ENCODE measurements at regions of chr12 and their contacts with region 1.

Region 1: DNA sequence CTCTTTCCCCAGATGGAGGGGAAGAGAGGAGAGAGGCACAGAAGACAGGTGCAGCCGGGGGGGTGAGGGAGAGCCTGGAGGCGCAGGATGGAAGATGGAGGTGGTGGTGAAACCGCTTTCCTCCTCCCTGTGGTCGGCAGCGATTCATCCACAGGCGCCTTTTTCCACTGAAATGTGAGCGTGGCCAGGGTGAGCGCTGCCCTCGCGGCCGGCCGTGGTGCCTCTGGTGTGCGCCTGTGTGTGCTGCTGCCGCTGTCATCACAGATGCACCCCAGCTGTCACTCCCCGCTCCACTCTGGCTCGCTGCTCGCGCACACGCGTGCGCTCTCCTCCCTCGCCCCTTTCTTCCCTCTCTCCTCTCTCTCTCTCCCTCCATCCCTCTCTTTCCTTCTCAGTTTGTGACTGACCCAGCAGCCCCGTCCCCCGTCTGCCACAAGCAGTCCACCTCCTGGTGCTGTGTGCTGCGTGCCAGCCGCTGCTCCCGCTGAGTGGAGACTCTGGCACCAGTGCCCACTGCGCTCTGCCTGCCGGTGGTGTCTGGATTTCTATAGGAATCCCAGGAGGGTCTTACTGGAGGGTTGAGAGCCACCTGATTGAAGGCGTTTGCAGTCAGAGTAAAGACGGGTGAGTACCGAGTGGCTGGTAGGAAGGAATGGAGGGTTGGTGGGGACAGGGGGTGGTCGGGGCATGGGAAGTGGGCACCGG is at the start of gene LRTM2:
- DNase-seq: no peak
- H3K4me3 ChIP-seq: no peak within 1 kb of the TSS
- H3K27ac ChIP-seq: no peak within 1 kb of the TSS
- H3K4me1 ChIP-seq: no peaks in the 10 kb centered on the region
- H3K27me3 ChIP-seq: peaks cover 19% of the 10 kb centered on the region
- CTCF ChIP-seq: no peak
- total RNA-seq, gene LRTM2: not detected

Region 2: DNA sequence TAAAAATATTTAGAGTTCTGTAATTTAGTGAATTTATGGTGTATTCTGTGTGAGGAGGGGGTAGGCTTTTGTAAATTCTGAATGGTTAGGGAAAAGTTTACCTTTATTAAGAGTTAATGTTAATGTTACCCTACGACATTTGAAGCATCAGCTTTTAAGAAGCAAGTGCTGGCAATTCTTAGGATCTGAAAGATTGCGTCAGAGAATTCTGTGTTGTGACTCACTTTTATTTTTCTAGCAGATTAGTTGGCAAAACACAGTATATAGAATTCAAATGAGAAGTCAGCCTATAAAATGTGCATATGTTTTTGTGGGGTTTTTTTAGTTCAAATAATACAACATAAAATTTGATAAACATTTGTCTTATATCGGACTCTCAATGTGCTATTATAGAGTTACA is 968.4 kb before region 1 on chr12:
- intact Hi-C with region 1: no loop called
- DNase-seq: no peak
- H3K4me3 ChIP-seq: no peak overlapping the region
- H3K27ac ChIP-seq: no peak overlapping the region
- H3K4me1 ChIP-seq: no peaks in the 10 kb centered on the region
- H3K27me3 ChIP-seq: no peaks in the 10 kb centered on the region
- CTCF ChIP-seq: no peak

Region 3: GRCh38 chr12:1916371-1917171 is 96.2 kb after region 1 on chr12:
- intact Hi-C with region 1: loop called (anchors 5 kb)
- DNase-seq: peak; percentile 21
- H3K4me3 ChIP-seq: no peak overlapping the region
- H3K27ac ChIP-seq: no peak overlapping the region
- H3K4me1 ChIP-seq: no peaks in the 10 kb centered on the region
- H3K27me3 ChIP-seq: no peaks in the 10 kb centered on the region
- CTCF ChIP-seq: no peak